Right ventricle myocardium superior (tissue), 1 donor: ENCODE measurements at regions of chr14 and their contacts with region 1.

Region 1: GRCh38 chr14:29710015-29710565 is 217.6 kb downstream of the PRKD1 start:
- DNase-seq: no peak
- ATAC-seq: no peak

Region 2: DNA sequence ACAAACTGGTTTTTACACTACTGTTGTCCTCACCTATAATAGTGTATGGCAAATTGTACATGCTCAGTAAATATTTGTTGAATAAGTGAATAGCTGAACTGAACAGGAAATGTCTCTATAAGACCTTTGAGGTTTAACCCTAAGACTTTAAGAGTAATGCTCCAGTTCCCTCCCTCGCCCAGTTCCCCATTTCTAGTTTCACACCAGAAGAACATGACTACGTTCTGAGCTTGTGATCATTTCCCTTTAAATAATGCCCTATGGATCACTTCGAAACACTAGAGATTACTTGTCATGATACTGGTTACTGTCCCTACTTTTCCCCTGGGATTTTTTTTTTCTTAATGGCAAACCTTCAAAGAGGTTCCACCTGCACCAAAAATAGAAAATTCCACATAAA is 148.2 kb after region 1 on chr14:
- intact Hi-C with region 1: no loop called
- DNase-seq: no peak
- ATAC-seq: no peak

Region 3: GRCh38 chr14:29927376-29928116 is 217.5 kb after region 1 on chr14 and contains the start of gene PRKD1:
- intact Hi-C with region 1: loop called (anchors 10 kb)
- DNase-seq: peak; percentile 74
- ATAC-seq: peak; percentile 92
- total RNA-seq, gene PRKD1: 4.0 TPM

Region 4: GRCh38 chr14:29944091-29944490 is 234.0 kb after region 1 on chr14:
- intact Hi-C with region 1: no loop called
- DNase-seq: no peak
- ATAC-seq: no peak